ENCODE measurements at regions of chr17 and their contacts with region 1.

Region 1: DNA sequence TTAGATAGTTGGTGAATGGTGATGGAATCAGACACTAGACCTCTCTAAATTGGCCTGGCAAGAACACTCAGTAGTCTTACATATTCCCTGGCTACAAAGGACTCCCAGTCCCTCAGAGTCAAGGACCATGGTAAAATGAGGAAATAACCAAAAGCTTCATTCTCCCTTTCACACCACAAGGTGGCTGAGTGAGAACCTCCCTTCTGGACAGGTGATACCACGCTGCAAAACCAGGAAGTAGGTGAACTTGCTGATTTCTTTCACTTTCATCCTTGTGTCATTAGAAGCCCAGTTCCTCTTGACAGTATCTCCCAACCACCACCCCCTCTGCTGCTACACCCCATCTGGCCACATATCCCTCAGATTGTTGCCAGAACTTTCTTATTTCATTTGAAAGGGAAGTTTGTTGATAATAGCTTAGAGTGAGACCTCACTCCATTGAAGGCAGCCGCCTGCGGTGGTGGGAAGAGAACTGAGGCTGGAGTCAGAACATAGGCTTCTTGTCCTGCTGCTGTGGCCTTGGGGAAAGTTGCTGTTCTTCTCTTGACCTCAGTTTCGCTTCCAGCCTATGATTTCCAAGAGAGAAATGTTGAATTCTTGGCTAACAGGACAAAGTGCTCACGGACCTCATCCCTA is 290.6 kb upstream of the CCL2 start:
- DNase-seq: peak; percentile 84
- ATAC-seq: peak; percentile 88
- H3K4me3 ChIP-seq: no peak overlapping the region
- H3K27ac ChIP-seq: peak overlapping the region; percentile 69
- H3K4me1 ChIP-seq: peaks cover 46% of the 10 kb centered on the region
- H3K27me3 ChIP-seq: no peaks in the 10 kb centered on the region
- CTCF ChIP-seq: peak; percentile 30 to 48 (median 36); a peak in 5 of 6 replicates
- EP300 ChIP-seq: peak in 1 of 2 experiments; percentile 29; a peak in 1 of 4 replicates
- POLR2A ChIP-seq: no peak
- RAD21 ChIP-seq: peak; percentile 48

Region 2: DNA sequence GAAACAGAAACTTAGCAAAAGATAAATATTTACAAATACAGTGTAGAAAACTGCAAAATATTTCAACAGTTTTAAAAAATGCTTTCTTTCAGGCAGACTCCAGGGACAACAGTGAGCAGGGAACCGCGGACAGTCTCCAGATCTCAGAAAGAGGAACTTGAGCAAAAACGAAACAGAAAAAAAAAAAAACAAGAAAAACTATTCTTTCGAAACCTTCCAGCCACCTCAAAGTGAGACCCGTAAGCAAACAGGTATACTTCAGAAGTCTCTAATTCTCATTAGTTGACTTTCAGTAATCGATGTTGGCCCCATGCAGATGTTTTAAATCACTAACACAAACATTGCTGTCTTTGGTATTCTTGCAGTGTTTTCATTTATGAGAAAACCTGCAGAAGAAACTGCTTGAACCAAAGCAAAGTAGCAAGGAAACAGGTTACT is 414.2 kb after region 1 on chr17:
- CTCF ChIA-PET with region 1: no interaction called
- POLR2A ChIA-PET with region 1: no interaction called
- RAD21 ChIA-PET with region 1: no interaction called
- SMC1A ChIA-PET with region 1: no interaction called
- in situ Hi-C with region 1: no loop called
- intact Hi-C with region 1: loop called (anchors 10 kb)
- DNase-seq: peak; percentile 76
- ATAC-seq: peak; percentile 79
- H3K4me3 ChIP-seq: no peak overlapping the region
- H3K27ac ChIP-seq: no peak overlapping the region
- H3K4me1 ChIP-seq: peaks cover 28% of the 10 kb centered on the region
- H3K27me3 ChIP-seq: peaks cover 0 to 2% of the 10 kb centered on the region in 2 experiments; a peak in 1 of 4 replicates
- CTCF ChIP-seq: peak in 2 of 3 experiments; percentile 18 to 27; a peak in 1 of 6 replicates
- EP300 ChIP-seq: peak; percentile 77 to 92
- POLR2A ChIP-seq: no peak
- RAD21 ChIP-seq: no peak

Region 3: GRCh38 chr17:34613064-34614019 is 648.9 kb after region 1 on chr17:
- CTCF ChIA-PET with region 1: no interaction called
- POLR2A ChIA-PET with region 1: no interaction called
- RAD21 ChIA-PET with region 1: no interaction called
- SMC1A ChIA-PET with region 1: no interaction called
- in situ Hi-C with region 1: no loop called
- intact Hi-C with region 1: no loop called
- DNase-seq: no peak
- ATAC-seq: no peak
- H3K4me3 ChIP-seq: no peak overlapping the region
- H3K27ac ChIP-seq: no peak overlapping the region
- H3K4me1 ChIP-seq: no peaks in the 10 kb centered on the region
- H3K27me3 ChIP-seq: peaks cover 0 to 2% of the 10 kb centered on the region in 2 experiments; a peak in 3 of 4 replicates
- CTCF ChIP-seq: no peak
- EP300 ChIP-seq: no peak
- POLR2A ChIP-seq: no peak
- RAD21 ChIP-seq: no peak

Measured in GM12878 (cell line).